ENCODE measurements at regions of chr17 and their contacts with region 1.

Region 1: GRCh38 chr17:41930009-41930832 is at the start of gene ODAD4:
- DNase-seq: peak; percentile 92 to 97 (median 95)
- ATAC-seq: peak; percentile 99
- H3K4me3 ChIP-seq: peak within 1 kb of the TSS; percentile 45
- H3K27ac ChIP-seq: peak within 1 kb of the TSS; percentile 82
- H3K4me1 ChIP-seq: peaks cover 19 to 21% of the 10 kb centered on the region in 2 experiments; a peak in 4 of 5 replicates
- H3K27me3 ChIP-seq: no peaks in the 10 kb centered on the region
- CTCF ChIP-seq: peak; percentile 65 to 72 (median 69)
- EP300 ChIP-seq: no peak
- POLR2A ChIP-seq: peak; percentile 92
- RAD21 ChIP-seq: peak; percentile 34 to 61
- polyA plus RNA-seq, gene ODAD4: 0.30 to 0.81 TPM

Region 2: GRCh38 chr17:41844971-41845370 is 85.2 kb before region 1 on chr17:
- CTCF ChIA-PET with region 1: no interaction called
- POLR2A ChIA-PET with region 1: no interaction called
- in situ Hi-C with region 1: no loop called
- intact Hi-C with region 1: no loop called
- DNase-seq: no peak
- ATAC-seq: no peak
- H3K4me3 ChIP-seq: no peak overlapping the region
- H3K27ac ChIP-seq: no peak overlapping the region
- H3K4me1 ChIP-seq: no peaks in the 10 kb centered on the region; a peak in 1 of 5 replicates
- H3K27me3 ChIP-seq: no peaks in the 10 kb centered on the region
- CTCF ChIP-seq: no peak
- EP300 ChIP-seq: no peak
- POLR2A ChIP-seq: no peak
- RAD21 ChIP-seq: no peak

Region 3: DNA sequence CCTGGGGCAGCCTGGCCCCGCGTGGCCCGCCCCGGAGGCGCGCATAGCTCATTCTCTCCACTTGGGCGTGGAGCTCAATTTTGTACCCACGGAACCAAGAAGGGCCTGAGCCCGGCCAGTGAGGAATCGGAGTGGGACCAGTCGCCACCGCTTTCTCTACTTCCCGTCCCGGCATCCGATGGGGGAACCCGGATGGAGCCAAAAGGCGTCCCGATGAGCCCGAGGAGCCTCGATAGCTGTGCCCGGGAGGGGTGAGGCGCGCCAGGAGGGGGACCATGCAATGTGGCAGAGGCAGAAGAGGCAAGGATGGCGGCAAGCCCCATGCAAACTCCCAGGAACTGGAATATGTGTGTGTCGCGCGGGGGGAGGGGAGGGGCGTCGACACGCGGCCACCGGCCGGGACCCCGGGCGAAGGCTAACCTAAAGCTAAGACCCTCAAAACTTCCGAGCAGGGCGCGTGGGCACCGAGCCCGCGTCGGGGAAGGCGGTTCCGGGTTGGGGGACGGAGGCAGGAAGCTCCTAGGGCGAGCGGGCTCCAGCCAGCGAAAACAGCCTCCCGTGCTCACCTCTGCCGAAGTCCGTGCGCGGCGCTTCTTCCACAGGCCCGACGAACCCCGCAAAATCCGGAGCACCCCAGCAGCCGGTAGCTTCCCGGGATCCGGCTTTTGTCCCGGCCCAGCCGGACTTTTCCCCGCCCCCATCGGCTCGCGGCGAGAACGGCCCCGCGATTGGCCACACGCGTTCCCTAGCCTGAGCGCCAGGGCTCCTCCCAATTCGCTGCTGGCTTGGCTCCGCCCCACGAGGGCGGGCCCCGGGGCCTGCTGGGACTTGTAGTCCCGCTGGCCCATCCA is 11.7 kb before region 1 on chr17 and contains the start of gene ACLY:
- CTCF ChIA-PET with region 1: no interaction called
- POLR2A ChIA-PET with region 1: interaction called, 21 read pairs
- in situ Hi-C with region 1: no loop called
- intact Hi-C with region 1: no loop called
- DNase-seq: peak; percentile 99
- ATAC-seq: peak; percentile 97
- H3K4me3 ChIP-seq: peak within 1 kb of the TSS; percentile 61
- H3K27ac ChIP-seq: peak within 1 kb of the TSS; percentile 73
- H3K4me1 ChIP-seq: peaks cover 41 to 43% of the 10 kb centered on the region in 2 experiments
- H3K27me3 ChIP-seq: no peaks in the 10 kb centered on the region
- CTCF ChIP-seq: 0 out of 6 replicates have a peak, but pooled peaks of 1 of the 3 experiments have one; percentile 0
- EP300 ChIP-seq: no peak
- POLR2A ChIP-seq: peak; percentile 90
- RAD21 ChIP-seq: no peak
- polyA plus RNA-seq, gene ACLY: 42.9 to 58.5 TPM